BJ (cell line): ENCODE measurements at regions of chr6 and their contacts with region 1.

Region 1: DNA sequence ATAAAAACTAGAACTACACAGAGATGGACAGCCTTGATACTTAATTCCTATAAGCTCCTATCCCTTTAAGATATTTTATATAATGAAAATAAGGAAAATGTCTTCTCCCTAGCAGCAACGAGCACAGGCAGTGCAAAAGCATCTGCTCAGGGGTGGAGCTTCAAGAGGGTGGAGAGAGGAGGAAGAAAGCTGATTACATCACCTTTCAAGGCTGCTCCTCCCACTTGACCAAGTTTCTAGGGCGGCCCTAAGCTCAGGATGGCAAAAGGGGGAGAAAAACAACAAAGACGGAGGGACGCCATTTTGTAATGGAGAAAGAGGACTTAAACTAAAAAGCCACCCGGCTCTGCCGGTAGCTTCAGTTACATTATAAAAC is 2.2 kb downstream of the PPP1R10 start:
- DNase-seq: peak; percentile 94
- H3K4me3 ChIP-seq: peak overlapping the region; percentile 87
- H3K27me3 ChIP-seq: no peaks in the 10 kb centered on the region
- CTCF ChIP-seq: no peak

Region 2: GRCh38 chr6:30571075-30571768 is 43.6 kb before region 1 on chr6 and contains the start of gene ABCF1:
- CTCF ChIA-PET with region 1: interaction called, 4 read pairs
- POLR2A ChIA-PET with region 1: interaction called, 13 read pairs
- DNase-seq: peak; percentile 83
- H3K4me3 ChIP-seq: peak within 1 kb of the TSS; percentile 85
- H3K27me3 ChIP-seq: no peaks in the 10 kb centered on the region
- CTCF ChIP-seq: no peak
- polyA plus RNA-seq, gene ABCF1: 30.0 and 37.9 TPM in 2 replicates

Region 3: GRCh38 chr6:30724906-30725667 is 110.3 kb after region 1 on chr6:
- CTCF ChIA-PET with region 1: interaction called, 6 read pairs
- POLR2A ChIA-PET with region 1: interaction called, 12 read pairs
- DNase-seq: no peak
- H3K4me3 ChIP-seq: no peak overlapping the region
- H3K27me3 ChIP-seq: no peaks in the 10 kb centered on the region
- CTCF ChIP-seq: no peak

Region 4: DNA sequence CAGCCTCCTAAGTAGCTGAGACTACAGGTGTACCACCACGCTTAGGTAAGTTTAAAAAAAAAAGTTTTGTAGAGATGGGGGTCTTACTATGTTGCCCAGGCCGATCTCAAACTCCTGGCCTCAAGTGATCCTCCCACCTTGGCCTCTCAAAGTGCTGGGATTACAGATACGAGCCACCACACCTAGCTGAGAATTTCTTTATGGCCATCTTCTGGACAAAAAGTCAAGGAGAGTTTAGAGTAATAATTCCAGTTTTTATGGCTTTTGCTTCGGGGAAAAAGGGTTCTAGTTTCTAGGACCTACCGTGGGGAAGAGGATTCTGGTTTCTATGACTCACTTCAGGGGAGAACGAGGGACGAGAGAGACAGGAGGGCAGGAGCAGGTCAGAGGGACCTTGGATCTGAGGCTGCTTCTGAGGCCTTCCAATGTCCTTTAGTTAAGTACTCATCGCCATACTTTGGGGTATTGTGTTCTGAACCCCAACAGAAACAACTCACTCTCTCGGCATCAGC is 198.8 kb after region 1 on chr6:
- CTCF ChIA-PET with region 1: no interaction called
- POLR2A ChIA-PET with region 1: interaction called, 30 read pairs
- DNase-seq: no peak
- H3K4me3 ChIP-seq: no peak overlapping the region
- H3K27me3 ChIP-seq: no peaks in the 10 kb centered on the region
- CTCF ChIP-seq: no peak